Activated naive CD4-positive, alpha-beta T cell treated with anti-CD3 and anti-CD28 coated beads for 36 hours (primary cell): ENCODE measurements at regions of chr10 and their contacts with region 1.

Region 1: GRCh38 chr10:5623081-5623748 is 43.2 kb downstream of the ASB13 start:
- DNase-seq: peak; percentile 91
- H3K4me3 Mint-ChIP-seq: no peak overlapping the region
- H3K27ac Mint-ChIP-seq: no peak overlapping the region
- H3K4me1 Mint-ChIP-seq: peaks cover 13% of the 10 kb centered on the region
- H3K27me3 Mint-ChIP-seq: no peaks in the 10 kb centered on the region

Region 2: GRCh38 chr10:4586776-4587175 is 1036.4 kb before region 1 on chr10:
- CTCF ChIA-PET with region 1: no interaction called
- intact Hi-C with region 1: no loop called
- DNase-seq: no peak
- H3K4me3 Mint-ChIP-seq: no peak overlapping the region
- H3K27ac Mint-ChIP-seq: no peak overlapping the region
- H3K4me1 Mint-ChIP-seq: no peaks in the 10 kb centered on the region
- H3K27me3 Mint-ChIP-seq: peaks cover 2% of the 10 kb centered on the region

Region 3: GRCh38 chr10:5325076-5325475 is 298.1 kb before region 1 on chr10:
- CTCF ChIA-PET with region 1: no interaction called
- intact Hi-C with region 1: no loop called
- DNase-seq: no peak
- H3K4me3 Mint-ChIP-seq: no peak overlapping the region
- H3K27ac Mint-ChIP-seq: no peak overlapping the region
- H3K4me1 Mint-ChIP-seq: peaks cover 37% of the 10 kb centered on the region
- H3K27me3 Mint-ChIP-seq: no peaks in the 10 kb centered on the region

Region 4: DNA sequence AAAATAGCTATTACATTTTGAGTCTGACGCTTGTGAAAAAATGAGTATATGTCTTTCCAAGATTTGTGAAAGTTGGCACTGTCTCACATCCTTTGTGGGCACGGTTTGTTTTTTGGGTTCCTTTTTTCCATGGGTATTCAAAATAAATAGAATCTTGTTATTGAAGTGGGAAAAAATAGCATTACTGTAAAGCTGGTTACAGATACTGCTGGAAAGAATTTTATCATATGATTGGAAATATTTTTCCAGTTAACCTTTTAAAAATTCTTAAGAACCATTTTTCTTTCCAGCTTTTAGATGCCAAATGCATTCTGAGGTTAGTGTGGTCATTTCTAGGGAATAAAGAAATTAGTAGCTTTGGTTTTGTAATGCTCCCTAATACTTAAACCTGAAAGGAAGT is 199.4 kb before region 1 on chr10:
- CTCF ChIA-PET with region 1: interaction called, 11 read pairs
- intact Hi-C with region 1: no loop called
- DNase-seq: no peak
- H3K4me3 Mint-ChIP-seq: no peak overlapping the region
- H3K27ac Mint-ChIP-seq: no peak overlapping the region
- H3K4me1 Mint-ChIP-seq: peaks cover 6% of the 10 kb centered on the region
- H3K27me3 Mint-ChIP-seq: no peaks in the 10 kb centered on the region

Region 5: DNA sequence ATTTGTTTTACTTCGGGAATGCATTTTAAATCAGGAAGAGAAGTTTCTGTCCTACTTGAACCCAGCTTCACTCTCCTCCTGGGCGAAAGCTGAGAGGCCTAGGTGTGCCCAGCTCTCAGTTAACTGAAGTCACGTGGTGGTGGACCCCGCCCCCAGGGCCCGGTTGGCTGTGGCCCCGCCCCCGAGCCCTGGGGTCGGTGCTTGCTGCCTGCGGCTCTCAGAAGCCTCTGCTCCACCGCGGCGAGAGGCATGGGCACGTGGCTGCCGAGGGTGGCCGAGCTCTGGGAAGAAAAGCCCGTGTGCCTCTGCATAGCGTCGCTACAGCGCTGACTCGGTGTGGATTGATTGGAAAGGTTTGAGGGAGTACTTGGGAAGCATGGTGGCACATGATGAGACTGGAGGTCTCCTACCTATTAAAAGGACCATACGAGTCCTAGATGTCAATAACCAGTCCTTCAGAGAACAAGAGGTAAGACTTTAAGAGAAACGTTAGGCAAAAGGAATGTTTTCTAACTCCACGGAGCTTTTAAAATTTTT is 176.8 kb before region 1 on chr10:
- CTCF ChIA-PET with region 1: interaction called, 244 read pairs
- intact Hi-C with region 1: loop called (anchors 1 kb)
- DNase-seq: peak; percentile 77
- H3K4me3 Mint-ChIP-seq: peak overlapping the region; percentile 61
- H3K27ac Mint-ChIP-seq: peak overlapping the region; percentile 33
- H3K4me1 Mint-ChIP-seq: peaks cover 48% of the 10 kb centered on the region
- H3K27me3 Mint-ChIP-seq: no peaks in the 10 kb centered on the region

Region 6: DNA sequence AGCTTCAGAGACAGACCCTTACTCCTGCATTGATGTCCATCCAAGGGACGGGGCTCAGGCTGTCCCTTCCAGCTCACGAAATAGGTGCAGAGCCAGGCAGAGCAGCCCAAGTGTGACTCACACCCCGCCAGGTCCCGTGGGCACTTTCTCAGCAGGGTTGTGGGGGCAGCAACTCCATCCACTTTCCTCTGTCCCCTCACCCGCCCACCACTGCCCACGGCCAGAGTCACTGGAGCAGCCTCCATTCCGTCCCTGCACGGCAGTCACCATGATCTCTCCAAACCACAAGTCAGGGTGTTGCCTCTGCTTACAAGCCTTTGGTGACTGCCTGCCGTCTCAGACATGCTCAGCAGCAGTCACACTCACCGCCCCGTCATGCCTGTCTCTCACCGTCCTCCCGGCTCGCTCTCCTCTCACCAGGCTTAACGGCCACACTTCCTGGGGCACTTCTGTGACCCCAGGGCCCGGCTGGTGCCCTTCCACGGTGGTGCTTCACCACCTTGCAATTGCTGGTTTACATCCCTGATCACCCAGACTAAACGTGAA is 59.2 kb before region 1 on chr10:
- CTCF ChIA-PET with region 1: interaction called, 14 read pairs
- intact Hi-C with region 1: no loop called
- DNase-seq: peak; percentile 72
- H3K4me3 Mint-ChIP-seq: peak overlapping the region; percentile 59
- H3K27ac Mint-ChIP-seq: peak overlapping the region; percentile 79
- H3K4me1 Mint-ChIP-seq: peaks cover 40% of the 10 kb centered on the region
- H3K27me3 Mint-ChIP-seq: no peaks in the 10 kb centered on the region

Region 7: GRCh38 chr10:5595591-5596590 is 27.3 kb before region 1 on chr10:
- CTCF ChIA-PET with region 1: interaction called, 11 read pairs
- intact Hi-C with region 1: no loop called
- DNase-seq: no peak
- H3K4me3 Mint-ChIP-seq: no peak overlapping the region
- H3K27ac Mint-ChIP-seq: no peak overlapping the region
- H3K4me1 Mint-ChIP-seq: peaks cover 11% of the 10 kb centered on the region
- H3K27me3 Mint-ChIP-seq: peaks cover 5% of the 10 kb centered on the region